ENCODE measurements at regions of chr15 and their contacts with region 1.

Region 1: DNA sequence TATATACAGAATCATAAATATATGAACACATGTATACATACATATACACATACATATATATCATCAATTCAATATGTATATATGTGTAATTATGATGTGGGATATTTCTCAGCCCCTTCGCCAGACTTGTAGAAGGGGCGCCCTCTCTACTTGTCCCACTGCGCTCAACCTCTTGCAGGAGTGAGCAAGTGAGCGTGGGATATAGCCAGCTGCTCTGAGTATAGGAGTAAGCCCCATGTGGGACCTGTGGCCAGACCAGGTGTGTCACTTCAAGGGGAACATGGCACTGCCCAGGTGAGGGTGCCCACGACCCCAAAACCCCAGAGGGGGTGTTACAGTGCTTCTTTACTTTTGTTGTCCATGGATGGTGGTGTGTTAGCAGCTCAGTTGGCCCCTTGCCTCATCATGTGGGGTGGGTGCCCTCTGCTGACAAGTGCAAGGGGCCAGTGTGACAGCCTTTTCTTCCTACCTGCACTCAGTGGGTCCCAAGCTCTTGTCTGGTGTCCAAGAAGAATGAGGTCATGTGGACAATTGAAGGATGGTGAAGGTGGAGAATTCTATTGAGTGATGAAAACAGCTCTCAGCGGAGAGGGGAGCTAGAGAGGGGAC is 304.1 kb downstream of the UNC13C start:
- DNase-seq: peak in 1 of 2 experiments; percentile 11
- H3K4me3 ChIP-seq: no peak overlapping the region
- H3K4me3 Mint-ChIP-seq: no peak overlapping the region
- H3K27ac Mint-ChIP-seq: no peak overlapping the region
- H3K4me1 ChIP-seq: no peaks in the 10 kb centered on the region
- H3K4me1 Mint-ChIP-seq: no peaks in the 10 kb centered on the region
- H3K27me3 ChIP-seq: no peaks in the 10 kb centered on the region
- H3K27me3 Mint-ChIP-seq: no peaks in the 10 kb centered on the region
- CTCF ChIP-seq: no peak

Region 2: DNA sequence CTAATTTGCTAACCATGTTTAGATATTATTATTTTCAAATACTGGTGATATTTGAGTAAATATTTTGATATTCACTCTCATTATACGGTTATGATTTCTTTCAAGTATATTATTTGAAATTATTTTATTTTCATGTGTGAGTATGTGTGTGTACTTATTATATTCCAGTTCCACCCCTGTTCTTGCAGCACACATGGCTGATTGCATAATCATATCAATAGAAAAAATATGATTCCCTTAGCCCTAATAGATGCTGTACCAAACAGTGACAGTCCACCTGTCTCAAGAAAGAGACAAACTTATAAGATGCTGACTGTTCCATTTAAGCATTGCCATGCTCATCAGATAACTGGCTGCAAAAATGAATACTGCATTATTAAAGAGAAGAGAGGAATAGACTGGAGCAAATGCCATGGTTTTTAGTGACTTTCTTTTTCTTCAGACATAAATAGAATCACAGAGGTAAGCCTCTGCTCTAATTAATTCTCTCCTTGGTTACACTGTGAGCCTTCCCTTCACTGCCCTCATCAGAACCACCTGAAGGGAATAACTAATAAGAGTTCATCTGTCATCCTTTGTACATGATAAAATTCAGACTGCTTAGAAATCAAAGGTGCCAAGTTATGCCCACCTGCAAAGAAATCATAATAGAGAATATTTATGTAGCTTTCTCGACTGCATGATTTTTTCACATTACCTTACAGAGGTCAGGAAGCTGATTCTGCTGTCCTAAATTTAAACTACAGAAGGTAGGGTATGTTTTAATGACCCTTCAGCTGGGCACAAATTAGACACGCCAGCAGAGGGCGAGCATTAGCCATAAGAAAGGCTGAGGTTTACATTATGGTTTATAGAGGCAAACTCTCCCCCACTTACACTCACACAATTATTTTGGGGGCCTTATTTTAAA is 319.7 kb before region 1 on chr15:
- CTCF ChIA-PET with region 1: no interaction called
- POLR2A ChIA-PET with region 1: no interaction called
- intact Hi-C with region 1: loop called (anchors 2 kb)
- DNase-seq: peak; percentile 45 to 47
- H3K4me3 ChIP-seq: no peak overlapping the region
- H3K4me3 Mint-ChIP-seq: no peak overlapping the region
- H3K27ac Mint-ChIP-seq: no peak overlapping the region
- H3K4me1 ChIP-seq: 0 out of 2 replicates have a peak, but pooled peaks cover 6% of the 10 kb centered on the region
- H3K4me1 Mint-ChIP-seq: no peaks in the 10 kb centered on the region
- H3K27me3 ChIP-seq: no peaks in the 10 kb centered on the region
- H3K27me3 Mint-ChIP-seq: no peaks in the 10 kb centered on the region
- CTCF ChIP-seq: peak; percentile 63 to 64